Activated CD4-positive, alpha-beta memory T cell treated with anti-CD3 and anti-CD28 coated beads, Interleukin-2, amount 10 ng/mL, durations not matched to agents 7 days and 5 days (primary cell): ENCODE measurements at regions of chr17 and their contacts with region 1.

Region 1: GRCh38 chr17:35214631-35215273 is 20.6 kb upstream of the SLC35G3 start:
- DNase-seq: peak; percentile 48
- H3K4me3 Mint-ChIP-seq: peak overlapping the region; percentile 64
- H3K27ac Mint-ChIP-seq: peak overlapping the region; percentile 98
- H3K4me1 Mint-ChIP-seq: peaks cover 80% of the 10 kb centered on the region
- H3K27me3 Mint-ChIP-seq: no peaks in the 10 kb centered on the region

Region 2: DNA sequence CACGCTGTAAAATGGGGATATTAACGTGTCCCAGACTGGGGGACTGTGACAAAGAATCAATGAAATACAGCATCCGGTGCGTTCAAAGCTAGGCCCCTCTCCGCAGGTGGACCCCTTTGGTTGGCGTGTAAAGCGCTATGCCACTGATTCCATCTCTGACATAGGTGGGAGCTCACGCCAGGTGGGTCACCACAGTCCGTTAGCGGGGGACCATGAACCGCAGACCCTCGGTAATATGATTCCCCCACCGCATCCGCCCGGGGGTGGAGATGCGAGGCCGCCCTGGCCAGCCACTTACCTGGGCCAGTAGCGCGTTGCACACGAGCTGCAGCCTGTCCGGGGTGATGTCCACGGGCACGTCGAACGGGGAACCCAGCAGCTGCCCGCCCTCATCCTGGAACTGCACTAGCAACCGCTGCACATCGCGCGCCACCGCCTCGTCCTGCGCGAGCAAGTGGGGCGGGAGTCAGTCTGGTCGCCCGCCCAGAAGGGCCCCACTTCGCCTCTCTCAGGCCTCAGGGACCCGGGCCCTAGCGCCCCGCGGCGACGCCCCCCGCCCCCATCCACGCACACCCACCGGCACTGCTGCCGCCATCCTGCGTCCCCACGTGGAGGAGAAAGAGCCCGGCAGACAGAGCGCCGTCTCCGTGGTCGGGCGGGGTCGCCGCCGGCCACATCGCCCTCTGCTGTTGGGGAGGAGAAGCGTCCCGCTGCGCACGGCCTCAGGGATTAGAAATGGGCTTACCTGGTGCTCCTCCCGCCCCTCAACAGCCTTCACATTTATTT is 72.9 kb before region 1 on chr17 and contains the start of gene NLE1:
- CTCF ChIA-PET with region 1: interaction called, 4 read pairs
- POLR2A ChIA-PET with region 1: interaction called, 21 read pairs
- DNase-seq: peak; percentile 89
- H3K4me3 Mint-ChIP-seq: peak within 1 kb of the TSS; percentile 77
- H3K27ac Mint-ChIP-seq: peak within 1 kb of the TSS; percentile 65
- H3K4me1 Mint-ChIP-seq: peaks cover 30% of the 10 kb centered on the region
- H3K27me3 Mint-ChIP-seq: no peaks in the 10 kb centered on the region
- total RNA-seq, gene NLE1: 13.4 to 14.0 TPM

Region 3: DNA sequence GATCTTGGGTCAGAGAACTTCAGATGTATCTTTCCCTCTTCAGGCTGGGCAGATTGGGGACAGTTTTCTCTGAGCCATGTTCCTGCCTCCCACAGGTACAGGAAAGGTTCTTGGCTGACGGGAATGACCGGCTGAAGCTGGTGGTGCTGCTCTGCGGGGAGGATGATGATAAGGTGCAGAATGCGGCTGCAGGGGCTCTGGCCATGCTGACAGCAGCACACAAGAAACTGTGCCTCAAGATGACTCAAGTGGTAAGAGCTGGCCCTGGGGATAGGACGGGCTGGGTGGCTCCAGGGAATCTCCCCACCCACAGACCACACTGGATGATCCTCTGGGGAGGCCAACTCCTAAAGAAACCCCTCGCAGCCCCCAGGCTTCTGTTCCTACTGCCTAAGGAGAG is 31.4 kb before region 1 on chr17:
- CTCF ChIA-PET with region 1: interaction called, 8 read pairs
- POLR2A ChIA-PET with region 1: interaction called, 72 read pairs
- DNase-seq: no peak
- H3K4me3 Mint-ChIP-seq: no peak overlapping the region
- H3K27ac Mint-ChIP-seq: no peak overlapping the region
- H3K4me1 Mint-ChIP-seq: peaks cover 23% of the 10 kb centered on the region
- H3K27me3 Mint-ChIP-seq: no peaks in the 10 kb centered on the region

Region 4: DNA sequence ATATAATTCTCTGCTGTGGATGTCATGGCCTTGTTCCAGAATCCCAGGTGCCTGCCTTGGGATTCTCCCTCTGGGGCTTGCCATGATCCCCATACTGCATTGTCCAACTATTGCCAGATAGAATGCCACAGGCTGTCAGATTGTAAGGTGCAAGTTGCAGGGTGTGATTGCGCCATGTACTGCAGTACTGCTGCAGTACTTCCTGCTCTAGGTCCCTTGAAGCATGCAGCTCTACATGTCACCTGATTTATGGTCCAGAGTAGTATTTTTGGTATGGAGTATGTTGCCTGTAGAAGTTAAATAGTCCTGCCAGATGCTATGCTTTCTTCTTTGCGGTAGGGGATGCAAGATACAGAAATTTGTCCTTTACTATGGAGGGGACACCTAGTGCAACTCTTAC is 21.2 kb after region 1 on chr17:
- CTCF ChIA-PET with region 1: interaction called, 48 read pairs
- POLR2A ChIA-PET with region 1: interaction called, 498 read pairs
- DNase-seq: no peak
- H3K4me3 Mint-ChIP-seq: no peak overlapping the region
- H3K27ac Mint-ChIP-seq: no peak overlapping the region
- H3K4me1 Mint-ChIP-seq: peaks cover 40% of the 10 kb centered on the region
- H3K27me3 Mint-ChIP-seq: no peaks in the 10 kb centered on the region

Region 5: GRCh38 chr17:35312790-35313711 is 98.3 kb after region 1 on chr17:
- CTCF ChIA-PET with region 1: interaction called, 3 read pairs
- POLR2A ChIA-PET with region 1: interaction called, 21 read pairs
- DNase-seq: peak; percentile 84
- H3K4me3 Mint-ChIP-seq: peak overlapping the region; percentile 83
- H3K27ac Mint-ChIP-seq: peak overlapping the region; percentile 90
- H3K4me1 Mint-ChIP-seq: peaks cover 42% of the 10 kb centered on the region
- H3K27me3 Mint-ChIP-seq: peaks cover 3% of the 10 kb centered on the region

Region 6: GRCh38 chr17:35359398-35359797 is 144.6 kb after region 1 on chr17:
- CTCF ChIA-PET with region 1: no interaction called
- POLR2A ChIA-PET with region 1: no interaction called
- DNase-seq: no peak
- H3K4me3 Mint-ChIP-seq: no peak overlapping the region
- H3K27ac Mint-ChIP-seq: no peak overlapping the region
- H3K4me1 Mint-ChIP-seq: peaks cover 56% of the 10 kb centered on the region
- H3K27me3 Mint-ChIP-seq: no peaks in the 10 kb centered on the region

Region 7: GRCh38 chr17:35578197-35578928 is 363.6 kb after region 1 on chr17 and contains the start of gene PEX12:
- CTCF ChIA-PET with region 1: no interaction called
- POLR2A ChIA-PET with region 1: interaction called, 24 read pairs
- DNase-seq: peak; percentile 91
- H3K4me3 Mint-ChIP-seq: peak within 1 kb of the TSS; percentile 94
- H3K27ac Mint-ChIP-seq: peak within 1 kb of the TSS; percentile 94
- H3K4me1 Mint-ChIP-seq: peaks cover 29% of the 10 kb centered on the region
- H3K27me3 Mint-ChIP-seq: peaks cover under 1% of the 10 kb centered on the region
- total RNA-seq, gene PEX12: 3.8 to 4.5 TPM